Dendritic cell treated with granulocyte-macrophage colony-stimulating factor and Interleukin-4, amounts not matched to agents 40 ng/mL and 50 ng/mL, for 4 days (primary cell): ENCODE measurements at regions of chr10 and their contacts with region 1.

Region 1: DNA sequence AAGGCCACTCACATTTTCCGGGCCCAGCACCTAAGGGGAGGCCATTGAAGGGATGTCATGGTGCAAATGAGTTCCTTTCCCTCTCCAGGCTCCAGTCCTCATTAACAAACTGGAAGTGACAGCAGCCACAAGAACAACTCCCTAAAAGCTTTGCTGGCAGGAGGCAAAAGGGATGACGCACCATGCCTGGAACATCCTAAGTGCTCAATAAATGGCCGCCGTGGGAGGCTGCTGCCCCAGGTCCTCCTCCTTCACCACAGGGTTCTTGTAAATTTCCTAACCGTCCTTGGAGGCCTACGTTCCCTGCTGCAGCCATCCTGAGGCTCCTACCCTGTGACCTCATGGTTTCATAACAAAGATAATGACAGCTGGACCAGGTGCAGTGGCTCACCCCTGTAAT is 41.3 kb upstream of the CAMK1D start:
- H3K4me3 Mint-ChIP-seq: peak overlapping the region; percentile 45
- H3K27ac Mint-ChIP-seq: peak overlapping the region; percentile 98
- H3K4me1 Mint-ChIP-seq: peaks cover 27% of the 10 kb centered on the region
- H3K27me3 Mint-ChIP-seq: peaks cover 5% of the 10 kb centered on the region

Region 2: DNA sequence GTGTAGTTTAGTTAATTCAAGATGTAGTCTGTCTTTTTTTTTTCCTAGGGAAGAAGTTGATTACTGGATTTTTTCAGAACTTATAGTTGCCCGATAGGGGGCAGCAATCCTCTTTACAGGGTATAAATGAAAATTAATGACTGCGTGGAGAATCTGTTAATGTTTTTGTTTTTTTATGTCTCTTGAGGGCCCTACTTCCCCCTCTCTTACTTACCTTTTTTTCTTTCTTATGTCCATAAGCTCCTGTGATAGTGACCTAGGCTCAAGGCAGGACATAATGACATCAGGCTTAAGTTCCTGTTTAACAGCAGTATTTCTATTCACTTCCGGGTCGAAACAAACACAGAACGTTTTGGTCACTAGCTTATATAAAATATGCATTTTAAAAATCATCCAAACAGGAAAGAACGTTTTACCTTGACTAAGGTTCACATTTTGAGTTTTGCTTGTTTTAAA is 93.3 kb before region 1 on chr10:
- intact Hi-C with region 1: no loop called
- H3K4me3 Mint-ChIP-seq: peak overlapping the region; percentile 15
- H3K27ac Mint-ChIP-seq: peak overlapping the region; percentile 68
- H3K4me1 Mint-ChIP-seq: peaks cover 29% of the 10 kb centered on the region
- H3K27me3 Mint-ChIP-seq: no peaks in the 10 kb centered on the region

Region 3: DNA sequence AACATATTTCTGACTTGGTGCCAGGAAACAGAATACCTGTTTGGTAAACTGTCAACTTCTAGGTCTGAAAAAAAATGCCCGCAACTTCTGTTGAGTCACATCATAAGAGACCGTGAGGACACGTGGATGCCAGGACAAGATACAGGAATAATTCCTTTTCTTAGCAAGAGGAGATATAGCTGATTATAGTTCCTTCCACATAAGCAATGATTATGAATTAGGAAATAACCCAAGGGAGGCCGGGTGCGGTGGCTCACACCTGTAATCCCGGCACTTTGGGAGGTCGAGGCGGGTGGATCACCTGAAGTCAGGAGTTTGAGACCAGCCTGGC is 36.9 kb before region 1 on chr10:
- intact Hi-C with region 1: loop called (anchors 2 kb)
- H3K4me3 Mint-ChIP-seq: peak overlapping the region; percentile 23
- H3K27ac Mint-ChIP-seq: peak overlapping the region; percentile 91
- H3K4me1 Mint-ChIP-seq: peaks cover 33% of the 10 kb centered on the region
- H3K27me3 Mint-ChIP-seq: no peaks in the 10 kb centered on the region